Caco-2 (cell line): ENCODE measurements at regions of chr19 and their contacts with region 1.

Region 1: GRCh38 chr19:38729653-38730469 is 14.4 kb downstream of the CAPN12 start:
- DNase-seq: peak; percentile 87 to 92
- H3K4me3 ChIP-seq: no peak overlapping the region
- H3K4me3 Mint-ChIP-seq: peak overlapping the region; percentile 29
- H3K27ac Mint-ChIP-seq: peak overlapping the region; percentile 53
- H3K4me1 ChIP-seq: peaks cover 7% of the 10 kb centered on the region; the same call in 1 of the 2 replicates
- H3K4me1 Mint-ChIP-seq: peaks cover 29% of the 10 kb centered on the region
- H3K27me3 ChIP-seq: no peaks in the 10 kb centered on the region
- H3K27me3 Mint-ChIP-seq: no peaks in the 10 kb centered on the region
- CTCF ChIP-seq: peak; percentile 94 to 95

Region 2: DNA sequence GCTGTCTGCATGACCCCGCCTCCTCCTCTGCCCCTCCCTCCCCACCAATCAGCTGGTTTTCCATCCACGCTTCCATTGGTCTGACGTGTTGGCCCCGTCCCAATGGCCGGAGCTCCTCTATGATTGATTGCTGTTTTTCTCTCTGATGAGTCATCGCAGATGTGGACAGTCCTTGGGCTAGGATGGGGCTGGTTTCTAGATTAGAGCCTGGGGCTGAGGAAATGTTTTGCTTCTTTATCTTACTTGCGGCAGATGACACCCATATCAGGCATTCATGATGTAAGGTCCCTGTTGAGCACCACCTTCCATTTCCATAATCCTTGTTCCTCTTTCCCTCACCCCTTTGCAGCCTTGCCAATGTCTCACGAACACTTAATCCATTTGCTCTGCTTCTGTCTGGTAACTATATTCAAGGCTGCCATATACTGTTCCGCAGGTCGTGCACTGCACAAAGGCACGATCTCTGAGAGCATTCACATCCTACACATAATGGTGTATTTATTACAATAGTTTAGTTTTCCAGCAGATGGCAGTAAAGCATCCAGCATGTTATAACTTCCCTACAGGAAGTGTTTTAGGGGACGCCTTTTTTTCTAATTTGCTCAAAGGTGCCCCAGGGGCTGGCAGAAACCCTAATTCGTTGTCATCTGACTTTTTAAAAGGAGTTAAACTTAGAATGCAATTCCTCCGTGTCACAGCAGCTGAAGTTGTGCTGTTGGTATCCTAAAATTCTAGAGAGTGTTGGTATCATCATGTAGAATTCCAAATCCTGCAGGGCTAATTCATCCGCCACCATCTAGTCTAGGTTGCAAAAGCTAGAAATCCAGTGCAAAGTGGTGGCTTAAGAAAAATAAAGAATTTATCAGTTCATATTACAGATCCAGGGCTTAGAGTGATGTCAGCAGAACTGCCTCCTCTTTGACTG is 185.6 kb before region 1 on chr19:
- CTCF ChIA-PET with region 1: no interaction called
- POLR2A ChIA-PET with region 1: no interaction called
- intact Hi-C with region 1: loop called (anchors 10 kb)
- DNase-seq: peak; percentile 69 to 82
- H3K4me3 ChIP-seq: peak overlapping the region; percentile 24; the same call in 1 of the 2 replicates
- H3K4me3 Mint-ChIP-seq: peak overlapping the region; percentile 44
- H3K27ac Mint-ChIP-seq: no peak overlapping the region
- H3K4me1 ChIP-seq: 0 out of 2 replicates have a peak, but pooled peaks cover 9% of the 10 kb centered on the region
- H3K4me1 Mint-ChIP-seq: peaks cover 6% of the 10 kb centered on the region
- H3K27me3 ChIP-seq: no peaks in the 10 kb centered on the region
- H3K27me3 Mint-ChIP-seq: no peaks in the 10 kb centered on the region
- CTCF ChIP-seq: peak; percentile 47 to 71

Region 3: GRCh38 chr19:39328046-39328705 is 598.3 kb after region 1 on chr19:
- CTCF ChIA-PET with region 1: no interaction called
- POLR2A ChIA-PET with region 1: no interaction called
- intact Hi-C with region 1: no loop called
- DNase-seq: peak; percentile 83 to 93
- H3K4me3 ChIP-seq: no peak overlapping the region
- H3K4me3 Mint-ChIP-seq: no peak overlapping the region
- H3K27ac Mint-ChIP-seq: peak overlapping the region; percentile 75
- H3K4me1 ChIP-seq: peaks cover 13% of the 10 kb centered on the region
- H3K4me1 Mint-ChIP-seq: peaks cover 8% of the 10 kb centered on the region
- H3K27me3 ChIP-seq: no peaks in the 10 kb centered on the region
- H3K27me3 Mint-ChIP-seq: no peaks in the 10 kb centered on the region
- CTCF ChIP-seq: peak; percentile 98